Activated naive CD4-positive, alpha-beta T cell treated with anti-CD3 and anti-CD28 coated beads for 36 hours (primary cell): ENCODE measurements at regions of chr13 and their contacts with region 1.

Region 1: GRCh38 chr13:51583875-51584730 is at the start of gene WDFY2:
- DNase-seq: peak; percentile 99
- H3K4me3 Mint-ChIP-seq: peak within 1 kb of the TSS; percentile 88
- H3K27ac Mint-ChIP-seq: peak within 1 kb of the TSS; percentile 95
- H3K4me1 Mint-ChIP-seq: peaks cover 33% of the 10 kb centered on the region
- H3K27me3 Mint-ChIP-seq: no peaks in the 10 kb centered on the region
- total RNA-seq, gene WDFY2: 8.3 to 11.3 TPM

Region 2: DNA sequence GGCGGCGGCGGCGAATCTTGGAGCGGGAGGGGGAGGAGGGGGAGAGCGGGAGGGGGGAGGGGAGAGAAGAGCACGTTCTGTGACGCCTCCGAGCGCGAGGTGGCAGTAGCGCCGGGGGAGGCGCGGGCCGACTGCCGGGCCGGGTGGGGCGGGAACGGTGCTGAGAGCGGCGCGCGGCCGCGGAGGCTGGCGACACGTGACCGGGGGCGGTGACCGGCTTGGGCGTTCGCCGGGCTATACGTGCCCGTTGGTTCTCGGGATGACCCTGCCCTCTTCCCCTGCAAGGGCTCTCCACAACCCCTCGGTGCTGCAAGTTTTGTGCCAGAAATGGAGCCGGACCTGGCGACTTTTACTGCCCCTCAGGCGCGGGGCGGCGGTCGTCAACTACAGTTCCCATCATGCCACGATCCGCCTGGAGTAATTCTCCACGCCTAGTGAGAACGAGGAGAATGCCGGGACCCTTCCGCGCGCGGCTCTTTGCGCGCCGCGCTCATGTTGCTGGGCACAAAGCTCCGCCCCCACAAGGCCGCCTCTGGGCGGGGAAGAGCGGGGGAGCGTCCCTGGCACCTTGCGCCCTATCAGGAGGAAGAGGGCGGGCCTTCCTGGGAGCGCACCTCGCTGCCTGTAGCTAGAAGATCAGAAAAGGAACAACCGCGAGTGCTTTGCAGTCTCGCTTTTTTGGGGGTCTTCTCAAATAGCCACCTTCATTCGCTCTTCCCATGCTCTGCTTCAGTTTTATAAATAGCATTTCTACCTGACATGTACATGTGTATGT is 1791.4 kb before region 1 on chr13 and contains the start of gene KPNA3:
- CTCF ChIA-PET with region 1: no interaction called
- intact Hi-C with region 1: loop called (anchors 2 kb)
- DNase-seq: peak; percentile 96
- H3K4me3 Mint-ChIP-seq: peak within 1 kb of the TSS; percentile 92
- H3K27ac Mint-ChIP-seq: peak within 1 kb of the TSS; percentile 94
- H3K4me1 Mint-ChIP-seq: peaks cover 29% of the 10 kb centered on the region
- H3K27me3 Mint-ChIP-seq: peaks cover 4% of the 10 kb centered on the region
- total RNA-seq, gene KPNA3: 47.9 to 50.7 TPM

Region 3: GRCh38 chr13:51614350-51614786 is 30.3 kb after region 1 on chr13:
- CTCF ChIA-PET with region 1: interaction called, 10 read pairs
- intact Hi-C with region 1: loop called (anchors 1 kb)
- DNase-seq: peak; percentile 78
- H3K4me3 Mint-ChIP-seq: peak overlapping the region; percentile 74
- H3K27ac Mint-ChIP-seq: peak overlapping the region; percentile 96
- H3K4me1 Mint-ChIP-seq: peaks cover 18% of the 10 kb centered on the region
- H3K27me3 Mint-ChIP-seq: no peaks in the 10 kb centered on the region

Region 4: GRCh38 chr13:51645154-51645650 is 61.1 kb after region 1 on chr13:
- CTCF ChIA-PET with region 1: no interaction called
- intact Hi-C with region 1: loop called (anchors 1 kb)
- DNase-seq: peak; percentile 22
- H3K4me3 Mint-ChIP-seq: peak overlapping the region; percentile 30
- H3K27ac Mint-ChIP-seq: peak overlapping the region; percentile 39
- H3K4me1 Mint-ChIP-seq: peaks cover 40% of the 10 kb centered on the region
- H3K27me3 Mint-ChIP-seq: no peaks in the 10 kb centered on the region

Region 5: DNA sequence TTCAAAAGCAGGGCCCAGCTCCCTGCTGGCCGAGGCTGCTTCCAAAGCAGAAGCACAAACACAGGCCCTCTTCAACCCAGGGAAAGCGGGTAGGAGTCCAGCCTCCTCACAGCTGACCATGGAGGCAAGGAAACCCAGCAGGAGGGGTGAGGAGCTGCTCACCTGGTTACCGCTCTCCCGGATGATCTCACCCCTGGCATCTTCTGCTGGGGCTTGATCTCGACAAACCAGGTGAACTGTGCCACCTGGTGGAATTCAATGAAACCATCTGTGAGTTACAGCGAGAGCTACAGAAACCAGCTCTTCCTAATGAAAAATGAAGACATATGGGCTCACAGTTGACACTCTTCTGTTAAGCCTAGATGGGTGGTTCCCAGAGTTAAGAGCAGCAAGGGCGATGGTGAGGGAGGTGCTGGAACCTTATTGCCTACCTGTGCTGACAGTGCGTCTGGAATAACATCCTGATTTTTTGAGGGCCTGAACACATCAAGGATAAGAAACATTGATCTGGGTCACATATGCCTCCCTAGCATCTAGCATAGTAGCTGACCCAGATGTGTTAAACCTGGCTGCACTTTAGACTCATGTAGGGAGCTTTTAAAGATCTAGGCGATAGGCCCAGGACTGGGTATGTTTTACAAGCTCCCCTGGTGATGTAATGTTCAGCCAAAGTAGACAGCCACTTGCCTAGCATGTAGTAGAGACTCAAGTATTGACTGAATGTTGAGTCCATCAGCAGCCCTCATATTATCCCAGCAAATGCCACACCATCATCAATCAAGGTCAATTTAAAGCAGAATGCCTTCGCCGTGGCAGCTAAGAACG is 213.8 kb after region 1 on chr13:
- CTCF ChIA-PET with region 1: interaction called, 9 read pairs
- intact Hi-C with region 1: loop called (anchors 1 kb)
- DNase-seq: peak; percentile 83
- H3K4me3 Mint-ChIP-seq: no peak overlapping the region
- H3K27ac Mint-ChIP-seq: no peak overlapping the region
- H3K4me1 Mint-ChIP-seq: peaks cover 43% of the 10 kb centered on the region
- H3K27me3 Mint-ChIP-seq: no peaks in the 10 kb centered on the region

Region 6: GRCh38 chr13:52011632-52012511 is 427.8 kb after region 1 on chr13 and contains the start of gene ALG11:
- CTCF ChIA-PET with region 1: no interaction called
- intact Hi-C with region 1: loop called (anchors 1 kb)
- DNase-seq: peak; percentile 100
- H3K4me3 Mint-ChIP-seq: peak within 1 kb of the TSS; percentile 98
- H3K27ac Mint-ChIP-seq: peak within 1 kb of the TSS; percentile 85
- H3K4me1 Mint-ChIP-seq: peaks cover 14% of the 10 kb centered on the region
- H3K27me3 Mint-ChIP-seq: peaks cover 10% of the 10 kb centered on the region
- total RNA-seq, gene ALG11: 12.6 to 15.6 TPM

Region 7: DNA sequence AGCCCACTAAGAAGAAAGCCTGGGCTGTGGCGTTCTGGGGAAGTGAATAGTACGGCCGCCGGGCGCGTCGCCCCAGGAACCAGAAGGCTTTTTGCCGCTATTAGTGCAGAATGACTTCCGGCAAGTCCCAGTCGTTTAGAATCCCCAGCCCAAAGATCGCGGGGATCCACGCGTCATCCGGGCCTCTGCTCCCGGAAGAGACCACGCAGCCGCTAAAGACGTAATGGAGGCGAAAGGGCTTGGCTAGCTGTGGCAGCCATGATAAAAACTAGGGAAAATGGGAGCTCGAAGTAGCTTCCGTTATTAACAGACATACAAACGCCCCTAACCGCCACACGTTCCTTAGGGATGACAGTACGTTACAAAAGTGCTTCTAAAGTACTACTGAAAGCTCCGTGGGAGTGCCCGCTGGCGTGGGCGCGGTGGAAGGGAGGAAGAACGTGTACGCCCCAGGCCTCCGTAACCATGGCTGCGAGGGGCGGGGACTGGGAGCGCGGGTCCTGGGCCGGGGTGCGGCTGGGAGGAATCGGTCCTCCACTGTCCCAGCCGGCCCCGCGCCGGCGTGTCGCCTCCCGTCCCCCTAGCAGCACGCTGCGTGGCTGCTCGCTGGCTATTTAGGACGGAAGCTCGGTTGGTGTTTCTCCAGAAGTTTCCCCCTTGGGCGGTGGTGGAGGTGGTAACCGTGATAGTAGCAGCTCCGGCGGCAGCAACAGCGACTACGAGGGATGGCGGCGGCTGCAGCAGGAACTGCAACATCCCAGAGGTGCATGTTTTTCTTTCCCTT is 1068.3 kb after region 1 on chr13 and contains the start of gene SUGT1:
- CTCF ChIA-PET with region 1: no interaction called
- intact Hi-C with region 1: loop called (anchors 1 kb)
- DNase-seq: peak; percentile 95
- H3K4me3 Mint-ChIP-seq: no peak within 1 kb of the TSS
- H3K27ac Mint-ChIP-seq: no peak within 1 kb of the TSS
- H3K4me1 Mint-ChIP-seq: peaks cover 14% of the 10 kb centered on the region
- H3K27me3 Mint-ChIP-seq: no peaks in the 10 kb centered on the region
- total RNA-seq, gene SUGT1: 42.7 to 44.1 TPM